ENCODE measurements at regions of chr21 and their contacts with region 1.

Region 1: DNA sequence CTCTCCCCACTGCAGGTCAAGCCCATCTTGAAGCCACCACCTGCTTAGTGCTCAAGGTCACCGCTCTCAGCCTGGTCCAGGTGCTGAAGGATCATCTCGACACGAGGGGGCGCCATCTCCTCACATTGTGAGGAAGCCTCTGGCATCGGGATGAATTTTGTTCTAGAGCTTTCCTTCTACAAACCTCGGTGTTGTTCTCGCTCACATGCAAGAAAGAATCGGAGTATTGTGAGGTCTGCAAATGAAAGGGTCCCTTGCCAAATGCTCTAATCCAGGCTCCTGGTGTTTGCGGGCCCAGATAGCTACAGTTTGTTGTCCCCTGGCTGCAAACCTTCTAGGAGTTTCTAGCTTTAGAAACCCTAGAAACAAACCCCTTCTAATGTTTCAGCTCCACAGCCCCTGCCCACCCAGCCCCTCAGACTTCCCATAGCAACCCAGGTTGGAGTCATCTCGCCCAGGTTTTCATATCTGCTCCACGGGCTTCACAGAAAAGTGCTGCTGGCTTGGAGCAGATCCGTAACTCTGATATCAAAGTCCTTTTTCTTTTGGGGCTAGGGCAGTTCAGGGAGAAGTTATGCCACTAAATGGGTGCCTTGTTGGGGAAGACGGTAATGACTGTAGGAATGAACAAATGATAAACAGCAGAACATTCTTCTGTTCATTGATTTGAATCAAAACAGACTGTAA is 8.6 kb upstream of the ATP5PO start:
- DNase-seq: peak; percentile 88
- H3K4me3 ChIP-seq: no peak overlapping the region
- H3K27ac ChIP-seq: no peak overlapping the region
- H3K4me1 ChIP-seq: no peaks in the 10 kb centered on the region
- H3K27me3 ChIP-seq: peaks cover 3% of the 10 kb centered on the region
- CTCF ChIP-seq: peak; percentile 96

Region 2: GRCh38 chr21:33751120-33751519 is 173.1 kb before region 1 on chr21:
- CTCF ChIA-PET with region 1: no interaction called
- POLR2A ChIA-PET with region 1: no interaction called
- intact Hi-C with region 1: no loop called
- DNase-seq: peak; percentile 11
- H3K4me3 ChIP-seq: no peak overlapping the region
- H3K27ac ChIP-seq: no peak overlapping the region
- H3K4me1 ChIP-seq: peaks cover 23% of the 10 kb centered on the region
- H3K27me3 ChIP-seq: no peaks in the 10 kb centered on the region
- CTCF ChIP-seq: no peak

Region 3: DNA sequence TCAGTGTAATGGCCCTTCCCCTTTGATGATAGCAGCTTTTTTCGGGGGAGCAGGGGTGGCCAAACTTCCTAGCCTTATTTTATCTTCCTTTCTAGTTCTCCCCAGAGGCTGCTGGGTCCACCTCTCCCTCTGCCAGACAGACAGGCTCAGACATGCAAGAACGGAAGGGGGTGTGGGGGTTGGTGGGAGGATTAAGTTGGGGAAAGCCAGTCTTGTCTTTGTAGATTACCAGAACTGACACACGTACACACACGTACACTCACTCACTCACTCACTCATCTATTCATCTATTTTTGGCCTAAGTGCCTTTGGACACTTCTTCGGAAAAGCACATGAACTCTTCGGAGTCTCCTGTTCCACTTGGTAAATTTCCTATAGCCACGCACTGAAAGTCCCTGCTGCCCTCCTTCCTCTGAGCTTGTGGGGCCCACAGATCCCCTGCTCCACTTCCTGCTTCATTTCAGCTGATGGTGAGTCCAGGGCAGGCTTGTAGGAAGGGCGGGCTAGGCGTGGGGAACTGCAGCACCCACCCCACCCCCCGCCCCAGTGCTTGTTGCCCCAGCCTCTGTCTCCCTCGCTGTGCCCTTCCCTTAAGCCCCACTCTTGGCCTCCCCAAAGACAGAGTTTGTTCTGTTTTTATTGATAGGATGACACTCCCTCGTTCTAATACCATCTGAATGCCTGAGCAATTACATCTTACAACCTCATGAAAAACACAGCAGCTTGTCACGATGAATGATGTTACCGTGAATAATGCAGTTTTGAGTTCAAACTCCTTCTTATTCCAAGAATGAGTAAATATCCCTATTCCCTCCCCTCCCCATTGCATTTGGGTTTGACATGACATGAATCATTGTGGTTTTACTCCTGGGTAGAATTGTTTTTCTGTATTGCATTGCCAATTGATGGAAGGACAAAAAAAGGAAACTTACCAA is 52.1 kb after region 1 on chr21:
- CTCF ChIA-PET with region 1: no interaction called
- POLR2A ChIA-PET with region 1: no interaction called
- intact Hi-C with region 1: no loop called
- DNase-seq: peak; percentile 82
- H3K4me3 ChIP-seq: peak overlapping the region; percentile 1
- H3K27ac ChIP-seq: peak overlapping the region; percentile 92
- H3K4me1 ChIP-seq: peaks cover 46% of the 10 kb centered on the region
- H3K27me3 ChIP-seq: no peaks in the 10 kb centered on the region
- CTCF ChIP-seq: no peak

Region 4: DNA sequence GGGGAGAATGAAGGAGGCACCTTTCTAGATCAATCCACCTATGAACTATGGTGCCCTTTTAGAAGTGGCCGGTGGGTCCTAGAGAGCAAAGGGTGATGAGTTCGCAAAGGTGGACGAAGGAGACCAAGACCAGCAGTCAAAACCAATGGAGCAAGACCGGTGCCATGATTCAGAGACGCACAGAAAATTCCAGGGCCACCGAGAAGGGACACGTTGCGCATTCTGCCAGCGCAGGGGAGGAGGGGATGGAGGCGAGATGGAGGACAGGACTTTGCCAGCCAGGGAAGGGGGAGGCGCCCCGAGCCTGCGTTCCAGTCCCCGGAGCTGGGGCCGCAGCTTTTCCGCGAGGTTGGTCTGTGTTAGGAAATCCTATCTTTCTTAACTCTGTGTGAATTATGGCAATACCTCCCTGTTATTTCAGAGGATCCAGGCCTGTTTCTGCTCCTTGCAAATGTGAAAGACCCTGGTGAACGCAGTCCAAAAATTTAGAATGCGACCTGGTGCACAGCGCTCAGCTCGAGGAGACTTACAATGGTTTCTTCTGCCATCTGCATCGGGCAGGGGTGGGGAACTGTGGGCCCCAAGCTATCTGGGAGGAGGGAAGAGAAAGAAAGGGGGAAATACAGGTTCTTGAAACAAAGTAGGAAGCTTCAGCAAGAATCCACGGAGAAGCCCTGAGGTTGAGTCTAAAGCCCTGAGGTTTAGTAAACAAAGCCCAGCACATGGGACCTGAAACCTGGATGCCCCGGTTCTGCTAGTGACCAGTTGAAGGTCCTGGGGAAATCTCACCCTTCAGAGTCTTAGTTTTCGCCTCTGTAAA is 278.5 kb after region 1 on chr21:
- CTCF ChIA-PET with region 1: interaction called, 12 read pairs
- POLR2A ChIA-PET with region 1: no interaction called
- intact Hi-C with region 1: loop called (anchors 2 kb)
- DNase-seq: no peak
- H3K4me3 ChIP-seq: no peak overlapping the region
- H3K27ac ChIP-seq: no peak overlapping the region
- H3K4me1 ChIP-seq: peaks cover 37% of the 10 kb centered on the region
- H3K27me3 ChIP-seq: no peaks in the 10 kb centered on the region
- CTCF ChIP-seq: no peak

Region 5: GRCh38 chr21:34243562-34243961 is 319.3 kb after region 1 on chr21:
- CTCF ChIA-PET with region 1: interaction called, 5 read pairs
- POLR2A ChIA-PET with region 1: no interaction called
- intact Hi-C with region 1: loop called (anchors 2 kb)
- DNase-seq: peak; percentile 65
- H3K4me3 ChIP-seq: no peak overlapping the region
- H3K27ac ChIP-seq: no peak overlapping the region
- H3K4me1 ChIP-seq: no peaks in the 10 kb centered on the region
- H3K27me3 ChIP-seq: peaks cover 7% of the 10 kb centered on the region
- CTCF ChIP-seq: peak; percentile 74

Region 6: DNA sequence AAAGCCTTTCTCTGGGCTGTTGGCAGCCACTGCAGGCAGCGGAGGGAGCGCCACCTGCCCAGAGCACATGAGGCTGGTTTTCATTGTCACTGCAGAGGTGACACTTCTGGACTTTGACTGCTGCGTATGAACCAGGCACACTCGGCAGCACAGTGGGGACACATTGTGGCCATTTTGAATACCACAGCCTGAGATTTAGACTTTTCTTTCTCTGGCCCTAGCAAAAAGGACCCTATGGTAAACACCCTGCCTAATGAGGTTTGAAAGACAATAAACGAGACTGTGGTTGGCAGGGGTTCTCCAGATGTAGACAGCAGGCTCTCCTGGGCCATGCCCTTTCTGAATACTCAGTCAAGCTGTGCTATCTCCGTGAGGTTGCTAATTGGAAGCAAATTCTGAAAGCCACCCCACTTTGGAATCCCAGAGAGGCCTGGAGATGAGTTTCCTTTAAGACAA is 427.6 kb after region 1 on chr21:
- CTCF ChIA-PET with region 1: interaction called, 54 read pairs
- POLR2A ChIA-PET with region 1: interaction called, 3 read pairs
- intact Hi-C with region 1: loop called (anchors 1 kb)
- DNase-seq: peak; percentile 56
- H3K4me3 ChIP-seq: no peak overlapping the region
- H3K27ac ChIP-seq: no peak overlapping the region
- H3K4me1 ChIP-seq: no peaks in the 10 kb centered on the region
- H3K27me3 ChIP-seq: no peaks in the 10 kb centered on the region
- CTCF ChIP-seq: peak; percentile 64

Region 7: GRCh38 chr21:34367321-34367935 is 443.2 kb after region 1 on chr21:
- CTCF ChIA-PET with region 1: interaction called, 10 read pairs
- POLR2A ChIA-PET with region 1: no interaction called
- intact Hi-C with region 1: no loop called
- DNase-seq: peak; percentile 79
- H3K4me3 ChIP-seq: no peak overlapping the region
- H3K27ac ChIP-seq: no peak overlapping the region
- H3K4me1 ChIP-seq: no peaks in the 10 kb centered on the region
- H3K27me3 ChIP-seq: peaks cover 4% of the 10 kb centered on the region
- CTCF ChIP-seq: peak; percentile 80